ENCODE measurements at regions of chr19 and their contacts with region 1.

Region 1: GRCh38 chr19:46840136-46840942 is 10.3 kb downstream of the AP2S1 start:
- DNase-seq: peak; percentile 83
- H3K4me3 ChIP-seq: peak overlapping the region in 1 of 2 experiments; percentile 33; a peak in 1 of 4 replicates
- H3K27ac ChIP-seq: peak overlapping the region; percentile 30 to 31
- H3K4me1 ChIP-seq: peaks cover 0 to 3% of the 10 kb centered on the region in 2 experiments; a peak in 1 of 4 replicates
- H3K27me3 ChIP-seq: no peaks in the 10 kb centered on the region
- CTCF ChIP-seq: peak; percentile 92
- EP300 ChIP-seq: no peak
- RAD21 ChIP-seq: peak; percentile 85

Region 2: DNA sequence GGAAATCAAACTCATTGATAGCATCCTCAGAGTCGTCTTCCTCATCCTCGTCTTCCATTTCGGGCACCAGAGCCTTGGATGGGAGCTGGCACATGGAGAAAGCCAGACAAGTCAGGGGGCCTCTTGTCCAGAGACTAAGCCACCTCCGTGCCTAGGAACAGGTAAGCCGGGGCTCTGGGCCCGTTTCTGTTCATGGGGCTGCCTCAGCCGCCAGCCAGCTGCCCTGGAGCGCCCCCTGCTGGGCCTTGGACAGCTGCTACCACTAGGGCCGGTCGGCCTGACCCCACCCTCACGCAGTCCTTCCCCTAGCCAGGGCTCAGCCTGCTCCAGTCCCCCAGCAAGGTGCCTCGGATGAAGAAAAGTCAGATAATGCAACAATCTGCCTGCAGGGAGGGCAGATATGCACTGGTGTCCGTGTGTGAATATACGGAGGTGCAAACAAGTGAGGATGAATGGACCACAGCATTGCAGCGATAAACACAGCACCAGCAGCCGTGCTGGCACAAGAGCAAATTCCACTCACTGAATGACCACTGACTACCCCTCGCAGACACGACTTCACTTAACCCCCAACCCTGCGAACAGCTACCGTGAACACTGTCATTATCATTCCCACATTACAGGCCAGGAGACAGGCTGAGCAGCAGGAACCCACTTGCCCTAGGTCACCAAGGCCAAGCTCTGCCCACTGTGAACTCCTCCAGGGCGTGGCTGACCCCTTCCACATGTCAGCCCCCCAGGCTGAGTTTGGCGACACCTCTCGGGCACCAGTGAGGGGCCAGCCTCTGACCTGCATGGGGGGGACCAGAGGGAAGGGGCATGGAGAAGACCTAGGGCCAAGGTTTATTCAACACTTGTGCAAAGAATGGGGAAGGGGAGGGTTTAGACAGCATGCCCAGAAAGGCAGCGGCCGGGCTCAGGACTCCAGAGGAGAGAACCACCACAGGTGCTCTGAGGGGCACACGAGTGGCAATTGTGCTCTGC is 111.4 kb before region 1 on chr19:
- CTCF ChIA-PET with region 1: interaction called, 11 read pairs
- POLR2A ChIA-PET with region 1: no interaction called
- DNase-seq: peak; percentile 95
- H3K4me3 ChIP-seq: no peak overlapping the region; a peak in 1 of 4 replicates
- H3K27ac ChIP-seq: no peak overlapping the region; a peak in 1 of 4 replicates
- H3K4me1 ChIP-seq: peaks cover 3 to 10% of the 10 kb centered on the region in 2 experiments; a peak in 2 of 4 replicates
- H3K27me3 ChIP-seq: no peaks in the 10 kb centered on the region
- CTCF ChIP-seq: peak; percentile 94
- EP300 ChIP-seq: no peak
- RAD21 ChIP-seq: peak; percentile 74

Region 3: GRCh38 chr19:46753420-46754155 is 86.8 kb before region 1 on chr19:
- CTCF ChIA-PET with region 1: interaction called, 170 read pairs
- POLR2A ChIA-PET with region 1: interaction called, 4 read pairs
- DNase-seq: peak; percentile 77
- H3K4me3 ChIP-seq: no peak overlapping the region
- H3K27ac ChIP-seq: no peak overlapping the region
- H3K4me1 ChIP-seq: peaks cover 0 to 2% of the 10 kb centered on the region in 2 experiments; a peak in 1 of 4 replicates
- H3K27me3 ChIP-seq: no peaks in the 10 kb centered on the region
- CTCF ChIP-seq: peak; percentile 61
- EP300 ChIP-seq: no peak
- RAD21 ChIP-seq: peak; percentile 51

Region 4: GRCh38 chr19:46766569-46767317 is 73.6 kb before region 1 on chr19:
- CTCF ChIA-PET with region 1: interaction called, 21 read pairs
- POLR2A ChIA-PET with region 1: no interaction called
- DNase-seq: peak; percentile 74
- H3K4me3 ChIP-seq: no peak overlapping the region
- H3K27ac ChIP-seq: no peak overlapping the region
- H3K4me1 ChIP-seq: no peaks in the 10 kb centered on the region
- H3K27me3 ChIP-seq: no peaks in the 10 kb centered on the region
- CTCF ChIP-seq: peak; percentile 76
- EP300 ChIP-seq: no peak
- RAD21 ChIP-seq: peak; percentile 33

Region 5: GRCh38 chr19:46788262-46788967 is 51.9 kb before region 1 on chr19 and contains the start of gene SLC1A5:
- CTCF ChIA-PET with region 1: interaction called, 18 read pairs
- POLR2A ChIA-PET with region 1: interaction called, 5 read pairs
- DNase-seq: peak; percentile 97
- H3K4me3 ChIP-seq: peak within 1 kb of the TSS; percentile 62 to 95
- H3K27ac ChIP-seq: peak within 1 kb of the TSS; percentile 87 to 92
- H3K4me1 ChIP-seq: peaks cover 16 to 36% of the 10 kb centered on the region in 2 experiments; a peak in 3 of 4 replicates
- H3K27me3 ChIP-seq: no peaks in the 10 kb centered on the region
- CTCF ChIP-seq: no peak
- EP300 ChIP-seq: no peak; a peak in 1 of 4 replicates
- RAD21 ChIP-seq: no peak
- polyA plus RNA-seq, gene SLC1A5: 76.7 and 80.4 TPM in 2 replicates

Region 6: DNA sequence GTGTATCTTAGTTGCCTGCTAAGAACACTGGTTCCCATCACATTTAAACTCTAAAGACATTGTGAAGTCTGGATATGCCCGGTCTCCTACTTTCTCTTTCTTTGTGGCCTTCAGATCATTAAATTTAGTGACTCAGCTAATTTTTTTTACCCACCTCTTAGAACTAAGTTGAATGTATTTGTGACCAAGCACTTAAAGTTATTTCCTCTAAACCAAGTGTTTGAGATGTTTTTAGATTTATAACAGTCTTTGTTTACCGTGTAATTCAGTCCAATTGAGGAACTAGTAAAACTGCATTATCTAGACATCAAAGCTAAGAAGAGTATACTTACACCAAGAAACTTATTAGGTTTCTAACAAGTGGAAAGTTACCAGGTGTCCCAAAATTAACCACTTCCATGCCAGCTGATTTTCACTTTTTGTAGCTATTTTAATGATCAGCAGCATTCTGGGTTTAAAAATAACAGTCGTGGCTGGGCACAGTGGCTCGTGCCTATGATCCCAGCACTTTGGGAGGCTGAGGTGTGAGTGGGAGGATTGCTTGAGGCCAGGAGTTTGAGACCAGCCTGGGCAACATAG is 73.6 kb after region 1 on chr19:
- CTCF ChIA-PET with region 1: no interaction called
- POLR2A ChIA-PET with region 1: no interaction called
- DNase-seq: no peak
- H3K4me3 ChIP-seq: no peak overlapping the region
- H3K27ac ChIP-seq: peak overlapping the region; percentile 70 to 75
- H3K4me1 ChIP-seq: peaks cover 8 to 15% of the 10 kb centered on the region in 2 experiments; a peak in 3 of 4 replicates
- H3K27me3 ChIP-seq: no peaks in the 10 kb centered on the region
- CTCF ChIP-seq: no peak
- EP300 ChIP-seq: peak; percentile 60 to 82; a peak in 3 of 4 replicates
- RAD21 ChIP-seq: no peak

Region 7: GRCh38 chr19:47143322-47144073 is 303.2 kb after region 1 on chr19:
- CTCF ChIA-PET with region 1: no interaction called
- POLR2A ChIA-PET with region 1: no interaction called
- DNase-seq: no peak
- H3K4me3 ChIP-seq: no peak overlapping the region
- H3K27ac ChIP-seq: no peak overlapping the region
- H3K4me1 ChIP-seq: peaks cover 0 to 12% of the 10 kb centered on the region in 2 experiments; a peak in 1 of 4 replicates
- H3K27me3 ChIP-seq: no peaks in the 10 kb centered on the region
- CTCF ChIP-seq: no peak
- EP300 ChIP-seq: no peak
- RAD21 ChIP-seq: no peak

Measured in SK-N-SH (cell line).